ENCODE measurements at regions of chr12 and their contacts with region 1.

Region 1: DNA sequence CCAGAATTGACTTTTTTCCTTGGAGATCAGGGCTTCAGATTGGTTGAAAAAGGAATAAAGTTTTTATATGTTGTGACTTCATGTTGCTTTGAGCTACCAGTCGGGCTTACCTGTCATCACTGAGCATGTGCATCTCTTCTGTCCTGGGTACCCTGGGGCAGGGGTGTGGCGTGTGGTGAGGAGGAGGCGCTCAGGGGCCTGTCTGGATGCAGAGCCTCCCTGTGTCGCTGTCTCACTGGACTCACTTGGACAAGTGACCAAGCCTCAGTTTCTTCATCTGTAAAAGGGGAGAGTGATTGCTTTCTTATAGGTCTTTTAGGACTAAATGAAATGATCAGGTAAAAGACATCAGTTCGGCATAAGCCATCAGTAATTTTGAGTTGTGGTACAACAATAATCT is 22.1 kb downstream of the ATP6V0A2 start:
- DNase-seq: no peak
- H3K4me3 ChIP-seq: no peak overlapping the region
- H3K27ac ChIP-seq: no peak overlapping the region
- H3K4me1 ChIP-seq: no peaks in the 10 kb centered on the region
- H3K27me3 ChIP-seq: no peaks in the 10 kb centered on the region
- CTCF ChIP-seq: no peak
- POLR2A ChIP-seq: no peak

Region 2: GRCh38 chr12:123667791-123668560 is 66.3 kb before region 1 on chr12:
- intact Hi-C with region 1: loop called (anchors 2 kb)
- DNase-seq: no peak
- H3K4me3 ChIP-seq: no peak overlapping the region
- H3K27ac ChIP-seq: no peak overlapping the region
- H3K4me1 ChIP-seq: peaks cover 0 to 4% of the 10 kb centered on the region in 2 donors
- H3K27me3 ChIP-seq: no peaks in the 10 kb centered on the region
- CTCF ChIP-seq: no peak
- POLR2A ChIP-seq: no peak

Region 3: GRCh38 chr12:123787466-123787865 is 53.2 kb after region 1 on chr12:
- intact Hi-C with region 1: no loop called
- DNase-seq: no peak
- H3K4me3 ChIP-seq: no peak overlapping the region
- H3K27ac ChIP-seq: no peak overlapping the region
- H3K4me1 ChIP-seq: no peaks in the 10 kb centered on the region
- H3K27me3 ChIP-seq: no peaks in the 10 kb centered on the region
- CTCF ChIP-seq: no peak
- POLR2A ChIP-seq: no peak